HEK293 (cell line): ENCODE measurements at regions of chr5 and their contacts with region 1.

Region 1: GRCh38 chr5:179495906-179496455 is 54.4 kb upstream of the RUFY1 start:
- H3K4me3 ChIP-seq: no peak overlapping the region
- H3K27ac ChIP-seq: no peak overlapping the region
- H3K4me1 ChIP-seq: no peaks in the 10 kb centered on the region
- CTCF ChIP-seq: no peak

Region 2: DNA sequence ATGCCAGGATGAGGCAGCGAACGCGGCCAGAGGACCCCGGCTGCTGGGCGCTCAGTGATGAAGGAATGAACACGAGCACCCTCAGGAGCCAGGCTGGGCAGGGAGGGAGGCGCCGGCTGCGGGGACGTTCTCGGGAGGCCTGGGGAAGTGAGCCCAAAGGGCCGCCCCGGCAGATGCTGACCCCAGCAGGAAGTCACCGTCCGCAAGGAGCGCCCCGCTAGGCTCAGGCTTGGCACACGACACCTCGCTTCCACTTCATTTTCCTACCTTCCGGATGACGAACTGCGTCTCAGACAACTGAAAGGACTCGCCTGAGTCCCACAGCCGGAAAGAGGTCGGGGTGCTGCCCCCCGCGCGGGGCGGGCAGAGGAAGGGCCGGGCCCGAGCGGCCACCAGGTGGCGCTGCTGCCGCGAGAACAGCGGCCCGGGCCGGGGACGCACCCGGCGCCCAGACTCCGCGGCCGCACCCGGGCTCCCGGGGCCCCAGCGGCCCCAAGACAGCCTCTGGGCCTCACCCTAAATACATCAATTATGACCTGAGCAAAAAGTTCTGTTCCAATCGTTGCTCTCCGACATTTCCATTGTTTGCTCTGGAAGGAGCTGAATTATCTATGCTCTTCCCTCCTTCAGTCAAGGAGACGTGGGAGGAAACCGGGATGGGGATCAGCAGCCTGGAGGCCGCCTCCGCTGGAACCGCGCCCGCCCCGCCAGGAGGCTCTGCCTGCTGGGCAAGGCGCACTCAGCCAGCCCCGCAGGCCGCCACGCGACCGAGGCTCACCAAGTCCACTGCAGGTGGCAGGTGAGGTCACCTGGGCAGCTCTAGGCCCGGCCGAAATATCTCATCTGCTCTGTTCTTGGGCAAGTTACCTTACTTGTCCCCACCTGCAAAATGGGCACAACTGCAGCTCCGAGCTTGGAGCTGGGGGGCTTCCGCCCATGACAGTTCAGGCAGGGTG is 328.8 kb before region 1 on chr5:
- CTCF ChIA-PET with region 1: interaction called, 27 read pairs
- POLR2A ChIA-PET with region 1: no interaction called
- H3K4me3 ChIP-seq: no peak overlapping the region
- H3K27ac ChIP-seq: no peak overlapping the region
- H3K4me1 ChIP-seq: no peaks in the 10 kb centered on the region
- CTCF ChIP-seq: peak; percentile 61